Endothelial cell of umbilical vein (primary cell): ENCODE measurements at regions of chr12 and their contacts with region 1.

Region 1: DNA sequence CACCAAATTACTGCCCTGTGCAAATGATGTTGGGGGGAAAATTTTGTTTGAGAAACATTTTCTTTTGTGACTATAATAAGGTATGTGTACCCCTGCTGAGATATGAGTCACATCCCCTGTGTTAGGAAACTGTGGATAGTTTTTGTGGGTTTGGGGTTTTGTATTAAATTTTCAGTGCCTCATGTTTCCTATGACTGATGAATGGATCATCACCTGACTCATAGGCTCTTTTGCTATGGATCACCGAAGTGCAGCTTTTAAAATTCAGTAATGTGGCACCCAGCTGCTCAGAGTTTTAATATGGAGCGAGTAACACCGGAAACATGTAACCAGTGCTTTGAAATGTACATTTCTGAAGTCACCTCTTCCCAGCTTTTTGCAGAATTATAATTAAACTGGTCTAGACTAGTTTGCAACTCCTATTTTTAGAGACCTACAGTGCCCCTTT is 167.4 kb upstream of the HMGA2 start:
- DNase-seq: peak; percentile 89
- H3K4me3 ChIP-seq: no peak overlapping the region
- H3K27ac ChIP-seq: peak overlapping the region; percentile 100
- H3K4me1 ChIP-seq: peaks cover 66% of the 10 kb centered on the region
- H3K27me3 ChIP-seq: no peaks in the 10 kb centered on the region
- CTCF ChIP-seq: no peak
- POLR2A ChIP-seq: peak; percentile 70

Region 2: GRCh38 chr12:65430571-65431306 is 226.2 kb before region 1 on chr12:
- CTCF ChIA-PET with region 1: no interaction called
- POLR2A ChIA-PET with region 1: no interaction called
- dilution Hi-C with region 1: no loop called
- intact Hi-C with region 1: loop called (anchors 5 kb)
- DNase-seq: peak; percentile 80
- H3K4me3 ChIP-seq: peak overlapping the region in 1 of 3 experiments; percentile 28
- H3K27ac ChIP-seq: peak overlapping the region; percentile 94
- H3K4me1 ChIP-seq: peaks cover 51% of the 10 kb centered on the region
- H3K27me3 ChIP-seq: no peaks in the 10 kb centered on the region
- CTCF ChIP-seq: no peak
- POLR2A ChIP-seq: peak; percentile 60

Region 3: GRCh38 chr12:65609359-65609771 is 47.6 kb before region 1 on chr12:
- CTCF ChIA-PET with region 1: interaction called, 4 read pairs
- POLR2A ChIA-PET with region 1: interaction called, 8 read pairs
- dilution Hi-C with region 1: no loop called
- intact Hi-C with region 1: loop called (anchors 1 kb)
- DNase-seq: peak; percentile 79
- H3K4me3 ChIP-seq: no peak overlapping the region
- H3K27ac ChIP-seq: peak overlapping the region; percentile 25
- H3K4me1 ChIP-seq: peaks cover 73% of the 10 kb centered on the region
- H3K27me3 ChIP-seq: no peaks in the 10 kb centered on the region
- CTCF ChIP-seq: peak; percentile 5 to 8
- POLR2A ChIP-seq: no peak

Region 4: GRCh38 chr12:65673732-65674131 is 16.8 kb after region 1 on chr12:
- CTCF ChIA-PET with region 1: interaction called, 10 read pairs
- POLR2A ChIA-PET with region 1: no interaction called
- dilution Hi-C with region 1: no loop called
- intact Hi-C with region 1: no loop called
- DNase-seq: peak; percentile 50
- H3K4me3 ChIP-seq: no peak overlapping the region
- H3K27ac ChIP-seq: no peak overlapping the region
- H3K4me1 ChIP-seq: peaks cover 12% of the 10 kb centered on the region
- H3K27me3 ChIP-seq: no peaks in the 10 kb centered on the region
- CTCF ChIP-seq: peak in 1 of 2 donors; percentile 2
- POLR2A ChIP-seq: no peak

Region 5: GRCh38 chr12:65740873-65741600 is 84.1 kb after region 1 on chr12:
- CTCF ChIA-PET with region 1: no interaction called
- POLR2A ChIA-PET with region 1: no interaction called
- dilution Hi-C with region 1: no loop called
- intact Hi-C with region 1: loop called (anchors 1 kb)
- DNase-seq: peak; percentile 82
- H3K4me3 ChIP-seq: peak overlapping the region; percentile 75 to 88 (median 81)
- H3K27ac ChIP-seq: peak overlapping the region; percentile 77
- H3K4me1 ChIP-seq: peaks cover 5% of the 10 kb centered on the region
- H3K27me3 ChIP-seq: no peaks in the 10 kb centered on the region
- CTCF ChIP-seq: no peak
- POLR2A ChIP-seq: no peak

Region 6: GRCh38 chr12:65832217-65832616 is 175.3 kb after region 1 on chr12:
- CTCF ChIA-PET with region 1: no interaction called
- POLR2A ChIA-PET with region 1: no interaction called
- dilution Hi-C with region 1: no loop called
- intact Hi-C with region 1: no loop called
- DNase-seq: no peak
- H3K4me3 ChIP-seq: no peak overlapping the region
- H3K27ac ChIP-seq: no peak overlapping the region
- H3K4me1 ChIP-seq: peaks cover 47% of the 10 kb centered on the region
- H3K27me3 ChIP-seq: no peaks in the 10 kb centered on the region
- CTCF ChIP-seq: no peak
- POLR2A ChIP-seq: no peak

Region 7: GRCh38 chr12:65948320-65949008 is 291.5 kb after region 1 on chr12:
- CTCF ChIA-PET with region 1: no interaction called
- POLR2A ChIA-PET with region 1: no interaction called
- dilution Hi-C with region 1: no loop called
- intact Hi-C with region 1: loop called (anchors 5 kb)
- DNase-seq: peak; percentile 100
- H3K4me3 ChIP-seq: peak overlapping the region in 2 of 3 experiments; percentile 13 to 42
- H3K27ac ChIP-seq: peak overlapping the region; percentile 96
- H3K4me1 ChIP-seq: peaks cover 67% of the 10 kb centered on the region
- H3K27me3 ChIP-seq: no peaks in the 10 kb centered on the region
- CTCF ChIP-seq: no peak
- POLR2A ChIP-seq: no peak